ENCODE measurements at regions of chr9 and their contacts with region 1.

Region 1: GRCh38 chr9:72280913-72281500 is 84.0 kb downstream of the ZFAND5 start:
- DNase-seq: peak; percentile 63 to 77
- ATAC-seq: peak; percentile 94 to 98
- H3K4me3 ChIP-seq: no peak overlapping the region
- H3K27ac ChIP-seq: peak overlapping the region in 1 of 2 experiments; percentile 19; a peak in 3 of 6 replicates
- H3K4me1 ChIP-seq: no peaks in the 10 kb centered on the region
- CTCF ChIP-seq: peak; percentile 95
- EP300 ChIP-seq: no peak
- POLR2A ChIP-seq: no peak
- RAD21 ChIP-seq: peak; percentile 98

Region 2: GRCh38 chr9:72038890-72039410 is 242.1 kb before region 1 on chr9:
- CTCF ChIA-PET with region 1: interaction called, 275 read pairs
- POLR2A ChIA-PET with region 1: no interaction called
- DNase-seq: peak; percentile 74 to 81
- ATAC-seq: peak; percentile 91 to 96
- H3K4me3 ChIP-seq: no peak overlapping the region
- H3K27ac ChIP-seq: no peak overlapping the region; a peak in 2 of 6 replicates
- H3K4me1 ChIP-seq: peaks cover 7% of the 10 kb centered on the region; the same call in 2 of the 3 replicates
- CTCF ChIP-seq: peak; percentile 90
- EP300 ChIP-seq: no peak
- POLR2A ChIP-seq: no peak
- RAD21 ChIP-seq: peak; percentile 98

Region 3: GRCh38 chr9:72292256-72292682 is 11.3 kb after region 1 on chr9:
- CTCF ChIA-PET with region 1: interaction called, 88 read pairs
- POLR2A ChIA-PET with region 1: no interaction called
- DNase-seq: peak; percentile 68 to 81
- ATAC-seq: peak; percentile 61 to 65
- H3K4me3 ChIP-seq: peak overlapping the region; percentile 5; the same call in 1 of the 3 replicates
- H3K27ac ChIP-seq: peak overlapping the region; percentile 95 to 97
- H3K4me1 ChIP-seq: peaks cover 39% of the 10 kb centered on the region
- CTCF ChIP-seq: peak; percentile 80
- EP300 ChIP-seq: no peak
- POLR2A ChIP-seq: no peak
- RAD21 ChIP-seq: peak; percentile 79 to 87

Region 4: GRCh38 chr9:72612445-72612844 is 331.4 kb after region 1 on chr9:
- CTCF ChIA-PET with region 1: interaction called, 16 read pairs
- POLR2A ChIA-PET with region 1: interaction called, 3 read pairs
- DNase-seq: no peak
- ATAC-seq: no peak
- H3K4me3 ChIP-seq: no peak overlapping the region
- H3K27ac ChIP-seq: no peak overlapping the region
- H3K4me1 ChIP-seq: no peaks in the 10 kb centered on the region
- CTCF ChIP-seq: no peak
- EP300 ChIP-seq: no peak
- POLR2A ChIP-seq: no peak
- RAD21 ChIP-seq: no peak

Region 5: DNA sequence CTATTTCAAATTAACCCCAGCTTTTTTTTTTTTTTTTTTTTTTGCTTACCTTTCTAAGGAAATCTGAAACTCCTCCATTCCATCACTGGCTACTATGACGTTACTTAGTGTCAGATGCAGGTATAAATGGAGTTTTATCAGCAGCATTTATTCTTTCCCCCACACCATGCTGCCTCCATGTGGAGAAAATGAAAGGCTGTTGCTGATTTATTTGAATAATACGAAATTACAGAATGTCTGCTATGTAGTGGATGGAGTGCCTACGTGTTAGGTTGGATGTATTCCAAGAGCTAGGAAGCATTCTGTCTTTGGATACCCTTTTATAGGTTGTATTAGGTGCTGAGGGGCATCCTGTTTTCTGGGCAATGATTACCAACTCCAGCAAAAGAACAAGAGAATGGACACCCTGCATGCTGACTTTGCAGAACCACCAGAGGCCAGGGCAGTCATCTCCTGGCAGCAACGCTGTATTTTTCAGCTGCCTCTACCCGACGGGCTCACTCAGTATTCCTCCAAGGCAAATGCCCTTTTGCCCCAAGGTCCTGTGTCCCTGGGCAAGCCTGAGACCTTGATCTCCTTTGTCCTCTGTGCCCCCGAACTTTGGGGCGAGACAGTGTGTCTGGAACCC is 472.4 kb after region 1 on chr9:
- CTCF ChIA-PET with region 1: interaction called, 53 read pairs
- POLR2A ChIA-PET with region 1: no interaction called
- DNase-seq: peak; percentile 13 to 56
- ATAC-seq: peak; percentile 47 to 79; a peak in 5 of 6 replicates
- H3K4me3 ChIP-seq: no peak overlapping the region
- H3K27ac ChIP-seq: peak overlapping the region; percentile 12 to 20; a peak in 3 of 6 replicates
- H3K4me1 ChIP-seq: 0 out of 3 replicates have a peak, but pooled peaks cover 2% of the 10 kb centered on the region
- CTCF ChIP-seq: peak; percentile 65
- EP300 ChIP-seq: no peak
- POLR2A ChIP-seq: no peak
- RAD21 ChIP-seq: peak; percentile 74 to 78

Region 6: GRCh38 chr9:72812559-72813111 is 531.6 kb after region 1 on chr9:
- CTCF ChIA-PET with region 1: interaction called, 340 read pairs
- POLR2A ChIA-PET with region 1: no interaction called
- DNase-seq: no peak
- ATAC-seq: no peak
- H3K4me3 ChIP-seq: no peak overlapping the region
- H3K27ac ChIP-seq: no peak overlapping the region
- H3K4me1 ChIP-seq: 0 out of 3 replicates have a peak, but pooled peaks cover 4% of the 10 kb centered on the region
- CTCF ChIP-seq: no peak
- EP300 ChIP-seq: no peak
- POLR2A ChIP-seq: no peak
- RAD21 ChIP-seq: no peak

Region 7: DNA sequence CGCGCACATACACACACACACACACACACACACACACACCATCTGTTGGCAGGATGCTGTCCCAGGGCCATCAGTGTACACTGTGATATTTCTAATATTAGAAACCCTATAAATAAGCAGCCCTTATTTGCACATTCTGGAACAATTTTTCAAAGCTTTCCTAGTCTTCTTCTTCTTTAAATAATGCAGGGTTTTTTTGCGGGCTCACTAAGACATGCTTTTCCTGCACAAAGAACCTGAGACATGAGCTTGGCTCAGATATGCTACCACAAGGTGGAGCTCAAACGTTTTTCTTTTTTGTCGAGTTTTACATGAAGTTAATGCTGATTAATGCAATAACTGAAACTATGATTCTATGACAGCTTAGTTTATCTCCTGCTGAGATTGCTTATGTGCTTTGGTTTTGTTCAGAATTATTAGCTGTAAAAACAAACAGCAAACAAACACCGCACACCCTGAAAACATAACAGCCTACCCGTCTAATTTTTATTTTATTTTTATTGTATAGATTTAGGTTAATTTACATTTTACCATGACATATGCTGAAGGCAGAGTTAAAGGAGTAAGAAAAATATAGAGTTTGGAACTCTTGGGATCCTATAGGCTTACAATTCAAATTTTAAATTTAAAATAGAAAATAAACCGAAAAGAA is 576.1 kb after region 1 on chr9:
- CTCF ChIA-PET with region 1: interaction called, 11 read pairs
- POLR2A ChIA-PET with region 1: no interaction called
- DNase-seq: peak; percentile 66 to 92
- ATAC-seq: peak; percentile 75
- H3K4me3 ChIP-seq: no peak overlapping the region
- H3K27ac ChIP-seq: peak overlapping the region; percentile 92 to 93
- H3K4me1 ChIP-seq: peaks cover 43% of the 10 kb centered on the region
- CTCF ChIP-seq: peak; percentile 82
- EP300 ChIP-seq: no peak
- POLR2A ChIP-seq: no peak
- RAD21 ChIP-seq: peak; percentile 80 to 82

Measured in A549 (cell line).